PC-3 (cell line): ENCODE measurements at regions of chr3 and their contacts with region 1.

Region 1: GRCh38 chr3:174862143-174862542 is 3.0 kb downstream of the NAALADL2 start:
- DNase-seq: peak; percentile 85
- ATAC-seq: peak; percentile 69
- H3K4me3 ChIP-seq: no peak overlapping the region
- H3K27ac ChIP-seq: peak overlapping the region; percentile 59; the same call in 1 of the 2 replicates
- H3K4me1 ChIP-seq: peaks cover 50% of the 10 kb centered on the region
- H3K27me3 ChIP-seq: no peaks in the 10 kb centered on the region
- CTCF ChIP-seq: peak; percentile 87

Region 2: DNA sequence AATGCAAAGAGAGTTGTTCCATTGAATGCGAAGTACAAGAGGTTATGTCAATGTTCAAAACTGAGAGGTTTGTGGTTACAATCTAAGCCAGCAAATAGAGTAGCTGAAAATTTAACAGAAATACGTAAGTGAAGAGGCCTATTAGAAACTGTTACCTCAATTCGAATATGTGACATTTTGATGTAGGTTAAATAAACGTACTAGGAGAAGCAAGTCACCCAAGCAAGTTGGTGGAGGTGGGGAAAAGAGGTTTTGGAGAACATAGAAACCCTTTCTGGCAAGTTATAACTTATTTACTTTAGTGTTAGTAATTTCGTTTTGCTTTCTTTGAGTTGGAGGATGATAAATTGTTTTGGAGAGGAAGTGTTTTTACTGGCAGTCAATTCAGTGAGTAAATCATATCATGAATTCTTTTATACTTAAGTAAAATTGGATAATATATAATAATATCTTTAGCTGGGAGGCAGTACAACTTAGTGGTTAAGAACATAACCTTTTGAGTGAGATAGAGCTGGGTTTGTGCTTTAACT is 94.2 kb before region 1 on chr3:
- CTCF ChIA-PET with region 1: no interaction called
- POLR2A ChIA-PET with region 1: no interaction called
- intact Hi-C with region 1: loop called (anchors 5 kb)
- DNase-seq: peak; percentile 74
- ATAC-seq: peak; percentile 85
- H3K4me3 ChIP-seq: 0 out of 2 replicates have a peak overlapping the region, but pooled peaks have one; percentile 6
- H3K27ac ChIP-seq: peak overlapping the region; percentile 62
- H3K4me1 ChIP-seq: peaks cover 39% of the 10 kb centered on the region
- H3K27me3 ChIP-seq: no peaks in the 10 kb centered on the region
- CTCF ChIP-seq: no peak

Region 3: GRCh38 chr3:174810254-174810653 is 51.9 kb before region 1 on chr3:
- CTCF ChIA-PET with region 1: no interaction called
- POLR2A ChIA-PET with region 1: no interaction called
- intact Hi-C with region 1: no loop called
- DNase-seq: no peak
- ATAC-seq: no peak
- H3K4me3 ChIP-seq: no peak overlapping the region
- H3K27ac ChIP-seq: no peak overlapping the region
- H3K4me1 ChIP-seq: no peaks in the 10 kb centered on the region
- H3K27me3 ChIP-seq: no peaks in the 10 kb centered on the region
- CTCF ChIP-seq: no peak

Region 4: GRCh38 chr3:174955513-174956001 is 93.4 kb after region 1 on chr3:
- CTCF ChIA-PET with region 1: interaction called, 8 read pairs
- POLR2A ChIA-PET with region 1: no interaction called
- intact Hi-C with region 1: loop called (anchors 5 kb)
- DNase-seq: peak; percentile 90
- ATAC-seq: peak; percentile 84
- H3K4me3 ChIP-seq: 0 out of 2 replicates have a peak overlapping the region, but pooled peaks have one; percentile 2
- H3K27ac ChIP-seq: peak overlapping the region; percentile 81
- H3K4me1 ChIP-seq: peaks cover 61% of the 10 kb centered on the region
- H3K27me3 ChIP-seq: no peaks in the 10 kb centered on the region
- CTCF ChIP-seq: no peak

Region 5: DNA sequence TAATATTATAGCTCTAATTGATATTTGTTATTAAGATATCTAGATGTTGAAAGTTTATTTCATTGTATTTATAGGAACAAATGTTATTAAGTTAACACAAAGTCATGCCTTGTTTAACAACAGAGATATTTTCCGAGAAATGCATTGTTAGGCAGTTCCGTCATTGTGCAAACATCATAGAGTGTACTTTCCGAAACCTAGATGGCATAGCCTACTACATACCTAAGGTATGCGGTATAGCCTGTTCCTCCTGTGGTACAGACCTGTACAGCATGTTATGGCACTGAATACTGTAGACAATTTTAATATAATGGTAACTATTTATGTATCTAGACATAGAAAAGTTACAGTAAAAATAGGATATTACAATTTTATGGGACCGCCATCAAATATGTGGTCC is 111.3 kb after region 1 on chr3:
- CTCF ChIA-PET with region 1: no interaction called
- POLR2A ChIA-PET with region 1: interaction called, 4 read pairs
- intact Hi-C with region 1: loop called (anchors 2 kb)
- DNase-seq: peak; percentile 97
- ATAC-seq: peak; percentile 100
- H3K4me3 ChIP-seq: no peak overlapping the region
- H3K27ac ChIP-seq: peak overlapping the region; percentile 35
- H3K4me1 ChIP-seq: peaks cover 17% of the 10 kb centered on the region
- H3K27me3 ChIP-seq: no peaks in the 10 kb centered on the region
- CTCF ChIP-seq: no peak

Region 6: GRCh38 chr3:175310046-175310445 is 447.9 kb after region 1 on chr3:
- CTCF ChIA-PET with region 1: no interaction called
- POLR2A ChIA-PET with region 1: no interaction called
- intact Hi-C with region 1: loop called (anchors 1 kb)
- DNase-seq: peak; percentile 70
- ATAC-seq: peak; percentile 69
- H3K4me3 ChIP-seq: no peak overlapping the region
- H3K27ac ChIP-seq: peak overlapping the region; percentile 44
- H3K4me1 ChIP-seq: peaks cover 23% of the 10 kb centered on the region
- H3K27me3 ChIP-seq: no peaks in the 10 kb centered on the region
- CTCF ChIP-seq: no peak